Astrocyte of the cerebellum (primary cell): ENCODE measurements at regions of chr6 and their contacts with region 1.

Region 1: DNA sequence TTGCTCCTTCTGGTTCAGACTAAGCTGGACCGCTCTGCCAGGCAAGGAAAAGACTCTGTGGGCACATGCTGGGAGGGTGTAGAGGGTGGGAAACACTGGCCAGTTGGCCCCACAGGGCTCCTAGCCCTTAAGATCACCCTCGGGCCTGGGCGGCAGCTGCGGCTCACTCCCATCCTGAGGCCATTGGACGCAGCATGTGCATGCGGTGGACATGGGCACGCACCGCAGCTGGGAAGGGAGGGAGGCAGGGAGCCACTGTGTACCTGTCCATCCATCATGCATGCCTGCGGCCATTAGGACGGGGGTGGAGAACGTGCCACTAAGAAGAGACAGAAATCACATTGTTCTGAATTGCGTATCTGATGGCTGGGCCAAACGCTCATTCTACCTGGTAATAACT is 140.1 kb upstream of the THBS2 start:
- DNase-seq: no peak
- H3K4me3 ChIP-seq: no peak overlapping the region
- CTCF ChIP-seq: no peak

Region 2: GRCh38 chr6:169035385-169036240 is 358.1 kb before region 1 on chr6:
- in situ Hi-C with region 1: no loop called
- DNase-seq: peak; percentile 40
- H3K4me3 ChIP-seq: no peak overlapping the region
- CTCF ChIP-seq: no peak

Region 3: GRCh38 chr6:169452117-169452868 is 58.5 kb after region 1 on chr6:
- in situ Hi-C with region 1: loop called (anchors 5 kb)
- DNase-seq: no peak
- H3K4me3 ChIP-seq: no peak overlapping the region
- CTCF ChIP-seq: no peak